ENCODE measurements at regions of chr9 and their contacts with region 1.

Region 1: DNA sequence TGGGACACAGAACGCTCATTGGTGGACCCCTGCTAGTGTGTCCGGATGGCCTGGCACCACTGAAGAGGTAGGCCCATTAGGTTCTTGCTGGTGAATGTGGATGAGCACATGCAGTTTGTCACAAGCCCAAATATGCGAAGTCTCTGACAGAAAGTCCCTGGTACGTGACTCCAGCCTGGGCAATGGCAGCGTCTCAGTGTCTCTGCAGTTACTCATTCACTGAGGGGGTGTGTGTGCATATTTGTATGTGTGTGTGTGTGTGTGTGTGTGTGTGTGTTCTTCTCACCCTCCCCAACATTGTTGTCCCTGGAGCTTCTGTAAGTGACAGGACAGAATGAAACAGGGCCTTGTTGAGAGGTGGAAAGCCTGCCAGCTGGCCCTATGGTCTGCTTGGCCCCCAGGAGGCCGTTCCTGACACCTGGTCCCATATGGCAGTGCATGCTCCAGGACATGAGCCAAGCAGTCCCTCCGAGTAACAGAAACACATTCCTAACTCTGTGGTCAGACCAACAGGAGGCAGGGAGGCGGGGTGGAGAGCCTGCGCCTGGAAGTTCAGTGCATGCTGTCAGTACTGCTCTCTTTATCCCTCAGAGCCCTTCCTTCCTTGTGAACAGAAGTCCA is 169.9 kb downstream of the SLC28A3 start:
- DNase-seq: peak; percentile 96
- H3K4me3 ChIP-seq: no peak overlapping the region
- H3K27ac ChIP-seq: peak overlapping the region; percentile 68 to 76 (median 72)
- H3K4me1 ChIP-seq: peaks cover 19 to 39% (median 29%) of the 10 kb centered on the region in 4 donors
- H3K27me3 ChIP-seq: no peaks in the 10 kb centered on the region
- CTCF ChIP-seq: peak in 2 of 3 experiments; percentile 9 to 33
- EP300 ChIP-seq: no peak
- POLR2A ChIP-seq: no peak

Region 2: GRCh38 chr9:83937911-83938323 is 232.7 kb before region 1 on chr9:
- intact Hi-C with region 1: loop called (anchors 5 kb)
- DNase-seq: no peak
- H3K4me3 ChIP-seq: no peak overlapping the region
- H3K27ac ChIP-seq: no peak overlapping the region
- H3K4me1 ChIP-seq: peaks cover 0 to 14% (median 3%) of the 10 kb centered on the region in 4 donors
- H3K27me3 ChIP-seq: no peaks in the 10 kb centered on the region
- CTCF ChIP-seq: peak; percentile 56 to 65 (median 62)
- EP300 ChIP-seq: no peak
- POLR2A ChIP-seq: no peak

Region 3: DNA sequence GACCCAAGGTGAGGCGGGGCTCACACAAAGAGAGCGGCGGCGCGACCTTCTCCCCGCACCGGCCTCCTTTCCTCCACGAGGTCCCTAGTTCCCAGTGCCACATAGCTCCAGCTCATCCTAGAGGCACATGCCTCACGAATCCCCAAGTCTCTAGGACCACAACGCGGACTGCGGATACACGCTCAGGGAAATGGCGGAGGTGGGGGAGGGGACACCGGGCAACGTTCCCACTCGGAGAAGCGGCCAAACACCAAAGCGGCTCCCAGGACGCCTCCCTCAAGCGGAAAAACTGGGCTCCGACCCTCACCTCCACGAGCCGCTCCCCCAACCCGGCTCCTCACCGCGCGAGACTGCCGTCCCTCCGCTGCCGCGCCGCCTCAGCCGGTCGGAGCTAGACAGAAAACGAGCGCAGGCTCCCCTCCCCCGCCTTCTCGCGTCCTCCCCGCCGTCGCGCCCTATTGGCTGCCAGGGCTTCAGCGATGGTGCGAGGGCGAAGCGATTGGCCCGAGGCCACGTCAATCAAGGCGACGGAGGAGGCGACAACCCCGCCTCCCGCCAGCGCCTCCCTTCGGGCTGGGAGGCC is 190.7 kb before region 1 on chr9 and contains the start of gene HNRNPK:
- intact Hi-C with region 1: loop called (anchors 5 kb)
- DNase-seq: peak; percentile 99
- H3K4me3 ChIP-seq: peak within 1 kb of the TSS; percentile 76 to 97 (median 88)
- H3K27ac ChIP-seq: peak within 1 kb of the TSS; percentile 98 to 99 (median 99)
- H3K4me1 ChIP-seq: peaks cover 34 to 51% (median 45%) of the 10 kb centered on the region in 4 donors
- H3K27me3 ChIP-seq: no peaks in the 10 kb centered on the region
- CTCF ChIP-seq: no peak
- EP300 ChIP-seq: no peak
- POLR2A ChIP-seq: no peak
- total RNA-seq, gene HNRNPK: 398 to 596 (median 550) TPM

Region 4: GRCh38 chr9:84261082-84261746 is 90.6 kb after region 1 on chr9:
- intact Hi-C with region 1: loop called (anchors 5 kb)
- DNase-seq: no peak
- H3K4me3 ChIP-seq: peak overlapping the region; percentile 32 to 52 (median 44)
- H3K27ac ChIP-seq: no peak overlapping the region
- H3K4me1 ChIP-seq: peaks cover 0 to 7% (median 0%) of the 10 kb centered on the region in 4 donors
- H3K27me3 ChIP-seq: peaks cover 0 to 10% (median 0%) of the 10 kb centered on the region in 4 donors
- CTCF ChIP-seq: peak; percentile 88 to 94 (median 92)
- EP300 ChIP-seq: no peak
- POLR2A ChIP-seq: no peak

Region 5: GRCh38 chr9:84513473-84513872 is 342.8 kb after region 1 on chr9:
- intact Hi-C with region 1: no loop called
- DNase-seq: no peak
- H3K4me3 ChIP-seq: no peak overlapping the region
- H3K27ac ChIP-seq: no peak overlapping the region
- H3K4me1 ChIP-seq: no peaks in the 10 kb centered on the region
- H3K27me3 ChIP-seq: no peaks in the 10 kb centered on the region
- CTCF ChIP-seq: no peak
- EP300 ChIP-seq: no peak
- POLR2A ChIP-seq: no peak